ENCODE measurements at regions of chr3 and their contacts with region 1.

Region 1: GRCh38 chr3:124084022-124084881 is 92.3 kb upstream of the ROPN1 start:
- DNase-seq: no peak
- ATAC-seq: no peak
- H3K4me3 ChIP-seq: no peak overlapping the region
- H3K27ac ChIP-seq: no peak overlapping the region
- H3K4me1 ChIP-seq: no peaks in the 10 kb centered on the region
- H3K27me3 ChIP-seq: no peaks in the 10 kb centered on the region; a peak in 2 of 4 replicates
- CTCF ChIP-seq: no peak
- EP300 ChIP-seq: no peak
- POLR2A ChIP-seq: no peak
- RAD21 ChIP-seq: no peak

Region 2: GRCh38 chr3:123584988-123585937 is 499.0 kb before region 1 on chr3 and contains the start of gene HACD2:
- CTCF ChIA-PET with region 1: no interaction called
- POLR2A ChIA-PET with region 1: no interaction called
- RAD21 ChIA-PET with region 1: no interaction called
- SMC1A ChIA-PET with region 1: no interaction called
- in situ Hi-C with region 1: no loop called
- intact Hi-C with region 1: no loop called
- DNase-seq: peak; percentile 90
- ATAC-seq: peak; percentile 95
- H3K4me3 ChIP-seq: peak within 1 kb of the TSS; percentile 86
- H3K27ac ChIP-seq: peak within 1 kb of the TSS; percentile 79
- H3K4me1 ChIP-seq: peaks cover 2% of the 10 kb centered on the region
- H3K27me3 ChIP-seq: no peaks in the 10 kb centered on the region
- CTCF ChIP-seq: no peak
- EP300 ChIP-seq: 0 out of 4 replicates have a peak, but pooled peaks of 1 of the 2 experiments have one; percentile 26
- POLR2A ChIP-seq: peak; percentile 87
- RAD21 ChIP-seq: no peak
- polyA plus RNA-seq, gene HACD2: 9.1 to 9.6 TPM

Region 3: GRCh38 chr3:123876858-123877257 is 207.4 kb before region 1 on chr3:
- CTCF ChIA-PET with region 1: no interaction called
- POLR2A ChIA-PET with region 1: no interaction called
- RAD21 ChIA-PET with region 1: no interaction called
- SMC1A ChIA-PET with region 1: no interaction called
- in situ Hi-C with region 1: no loop called
- intact Hi-C with region 1: loop called (anchors 10 kb)
- DNase-seq: no peak
- ATAC-seq: no peak
- H3K4me3 ChIP-seq: no peak overlapping the region
- H3K27ac ChIP-seq: no peak overlapping the region
- H3K4me1 ChIP-seq: no peaks in the 10 kb centered on the region
- H3K27me3 ChIP-seq: no peaks in the 10 kb centered on the region
- CTCF ChIP-seq: peak in 2 of 3 experiments; percentile 9 to 45; a peak in 2 of 6 replicates
- EP300 ChIP-seq: no peak
- POLR2A ChIP-seq: no peak
- RAD21 ChIP-seq: 0 out of 2 replicates have a peak, but pooled peaks have one; percentile 9

Region 4: GRCh38 chr3:124131580-124131979 is 47.3 kb after region 1 on chr3:
- CTCF ChIA-PET with region 1: no interaction called
- POLR2A ChIA-PET with region 1: no interaction called
- RAD21 ChIA-PET with region 1: no interaction called
- SMC1A ChIA-PET with region 1: no interaction called
- in situ Hi-C with region 1: no loop called
- intact Hi-C with region 1: no loop called
- DNase-seq: no peak
- ATAC-seq: no peak
- H3K4me3 ChIP-seq: no peak overlapping the region
- H3K27ac ChIP-seq: no peak overlapping the region
- H3K4me1 ChIP-seq: no peaks in the 10 kb centered on the region
- H3K27me3 ChIP-seq: peaks cover 0 to 2% of the 10 kb centered on the region in 2 experiments; a peak in 2 of 4 replicates
- CTCF ChIP-seq: no peak
- EP300 ChIP-seq: no peak
- POLR2A ChIP-seq: no peak
- RAD21 ChIP-seq: no peak

Region 5: DNA sequence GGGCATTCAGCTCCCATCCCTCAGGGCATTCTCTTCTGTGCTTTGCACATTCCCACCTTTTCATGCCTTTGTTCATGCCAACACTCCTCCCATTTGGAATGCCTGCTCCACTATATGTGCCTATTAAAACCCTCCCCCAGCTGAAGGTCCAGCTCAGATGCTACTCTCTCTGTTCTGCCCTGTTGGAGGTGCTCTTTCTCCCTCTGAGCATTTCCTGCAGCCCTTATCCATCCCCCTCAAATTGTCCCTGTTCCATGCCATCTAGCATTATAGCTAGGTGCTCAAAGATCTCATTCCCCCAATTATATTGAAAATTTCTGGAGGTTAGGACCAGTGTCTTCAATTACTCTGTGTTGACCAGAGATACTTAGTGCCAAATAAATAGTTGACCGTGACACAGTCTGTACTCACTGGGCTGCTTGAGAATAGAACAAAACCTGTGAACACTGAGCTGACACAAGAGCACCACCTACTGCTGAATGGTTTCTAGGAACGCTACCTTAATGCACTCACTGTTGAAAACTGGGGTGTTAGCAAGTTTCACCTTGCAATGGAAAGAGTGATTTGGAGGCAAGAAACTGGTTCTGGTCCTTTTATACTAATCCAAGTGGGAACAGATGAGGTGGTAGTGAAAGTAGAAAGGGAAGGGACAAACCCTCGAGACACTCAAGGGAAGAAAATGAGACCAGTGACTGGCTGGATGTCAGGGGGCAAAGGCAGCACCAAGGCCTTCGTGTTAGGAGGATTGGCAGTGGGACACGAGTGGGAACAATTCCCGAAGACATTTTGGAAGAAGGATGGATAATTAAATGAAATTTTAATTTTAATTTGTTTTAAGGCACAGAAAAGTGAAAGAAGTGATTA is 197.4 kb after region 1 on chr3:
- CTCF ChIA-PET with region 1: interaction called, 5 read pairs
- POLR2A ChIA-PET with region 1: no interaction called
- RAD21 ChIA-PET with region 1: interaction called, 3 read pairs
- SMC1A ChIA-PET with region 1: interaction called, 6 read pairs
- in situ Hi-C with region 1: no loop called
- intact Hi-C with region 1: loop called (anchors 10 kb)
- DNase-seq: no peak
- ATAC-seq: peak; percentile 80
- H3K4me3 ChIP-seq: no peak overlapping the region
- H3K27ac ChIP-seq: no peak overlapping the region
- H3K4me1 ChIP-seq: no peaks in the 10 kb centered on the region
- H3K27me3 ChIP-seq: no peaks in the 10 kb centered on the region
- CTCF ChIP-seq: peak; percentile 53 to 64 (median 56); a peak in 5 of 6 replicates
- EP300 ChIP-seq: no peak
- POLR2A ChIP-seq: no peak
- RAD21 ChIP-seq: peak; percentile 64

Measured in GM12878 (cell line).